ENCODE measurements at regions of chr11 and their contacts with region 1.

Region 1: DNA sequence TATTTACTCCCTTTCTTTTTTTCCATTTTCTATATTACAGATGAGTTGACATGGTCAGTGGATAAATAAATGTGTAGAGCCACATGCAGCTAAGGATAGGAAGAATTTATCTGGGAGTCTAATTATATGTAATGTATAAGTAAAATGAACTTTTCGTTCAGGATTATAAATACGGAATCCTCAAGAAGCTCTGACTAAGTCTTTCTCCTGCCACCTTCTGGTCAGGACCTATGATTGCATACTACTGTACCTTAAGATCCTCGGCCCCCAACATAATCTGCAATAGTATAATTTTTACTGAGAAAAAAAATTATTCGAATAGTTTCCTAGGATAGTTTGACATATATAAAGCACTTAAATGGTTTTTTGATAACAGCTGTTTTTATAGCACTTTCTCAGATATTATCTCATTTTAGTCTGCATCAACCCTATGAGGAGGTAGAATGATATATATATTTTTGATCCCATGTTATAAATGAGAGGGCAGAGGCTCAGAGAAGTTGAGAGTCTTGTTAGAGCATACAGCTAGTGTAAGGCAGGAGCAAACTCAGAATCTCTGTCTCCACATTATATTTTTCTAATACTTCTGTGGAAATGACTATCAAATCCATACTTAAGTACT is 36.1 kb downstream of the CCDC90B start:
- DNase-seq: peak in 7 of 9 donors; percentile 12 to 48 (median 40)
- ATAC-seq: peak; percentile 77
- H3K4me3 ChIP-seq: no peak overlapping the region
- H3K4me3 Mint-ChIP-seq: peak overlapping the region in 1 of 10 donors; percentile 32
- H3K27ac ChIP-seq: no peak overlapping the region
- H3K27ac Mint-ChIP-seq: no peak overlapping the region
- H3K4me1 ChIP-seq: no peaks in the 10 kb centered on the region
- H3K4me1 Mint-ChIP-seq: peaks cover 0 to 7% (median 0%) of the 10 kb centered on the region in 7 donors
- H3K27me3 ChIP-seq: no peaks in the 10 kb centered on the region
- H3K27me3 Mint-ChIP-seq: no peaks in the 10 kb centered on the region

Region 2: GRCh38 chr11:82988936-82989627 is 261.0 kb before region 1 on chr11:
- CTCF ChIA-PET with region 1: interaction called, 3 read pairs
- POLR2A ChIA-PET with region 1: no interaction called
- intact Hi-C with region 1: loop called in 1 of 2 experiments (anchors 1 kb)
- DNase-seq: no peak
- ATAC-seq: no peak
- H3K4me3 ChIP-seq: no peak overlapping the region
- H3K4me3 Mint-ChIP-seq: peak overlapping the region in 1 of 10 donors; percentile 13
- H3K27ac ChIP-seq: no peak overlapping the region
- H3K27ac Mint-ChIP-seq: peak overlapping the region in 4 of 9 donors; percentile 22 to 69 (median 32)
- H3K4me1 ChIP-seq: peaks cover 0 to 4% of the 10 kb centered on the region in 2 donors
- H3K4me1 Mint-ChIP-seq: peaks cover 1 to 24% (median 15%) of the 10 kb centered on the region in 7 donors
- H3K27me3 ChIP-seq: no peaks in the 10 kb centered on the region
- H3K27me3 Mint-ChIP-seq: no peaks in the 10 kb centered on the region

Region 3: GRCh38 chr11:83087035-83087434 is 163.0 kb before region 1 on chr11:
- CTCF ChIA-PET with region 1: interaction called, 5 read pairs
- POLR2A ChIA-PET with region 1: interaction called, 4 read pairs
- intact Hi-C with region 1: loop called (anchors 1 to 2 kb)
- DNase-seq: no peak
- ATAC-seq: no peak
- H3K4me3 ChIP-seq: no peak overlapping the region
- H3K4me3 Mint-ChIP-seq: no peak overlapping the region
- H3K27ac ChIP-seq: peak overlapping the region; percentile 10
- H3K27ac Mint-ChIP-seq: peak overlapping the region in 8 of 9 donors; percentile 10 to 74 (median 38)
- H3K4me1 ChIP-seq: peaks cover 0 to 4% of the 10 kb centered on the region in 2 donors
- H3K4me1 Mint-ChIP-seq: peaks cover 8 to 44% (median 32%) of the 10 kb centered on the region in 7 donors
- H3K27me3 ChIP-seq: no peaks in the 10 kb centered on the region
- H3K27me3 Mint-ChIP-seq: no peaks in the 10 kb centered on the region

Region 4: DNA sequence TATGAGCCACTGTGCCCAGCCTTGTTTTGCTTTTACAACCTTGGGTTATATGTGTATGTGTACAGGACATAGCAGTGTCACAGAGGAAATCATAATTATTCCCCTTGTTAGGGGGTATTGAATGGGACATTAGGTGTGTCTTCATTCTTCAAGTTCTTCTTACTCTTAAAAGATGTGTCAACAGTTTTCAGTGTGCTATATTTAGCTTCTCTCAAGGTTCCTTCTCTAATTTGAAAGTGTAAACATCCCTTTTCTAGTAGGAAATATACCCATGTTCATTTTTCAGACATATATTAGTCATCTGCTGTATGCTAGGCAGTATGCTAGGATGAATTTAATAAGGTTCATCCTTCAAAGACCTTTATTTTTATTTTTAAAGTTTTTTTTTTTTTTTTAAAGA is 76.1 kb before region 1 on chr11:
- CTCF ChIA-PET with region 1: interaction called, 4 read pairs
- POLR2A ChIA-PET with region 1: no interaction called
- intact Hi-C with region 1: loop called in 1 of 2 experiments (anchors 5 kb)
- DNase-seq: no peak
- ATAC-seq: peak; percentile 37
- H3K4me3 ChIP-seq: no peak overlapping the region
- H3K4me3 Mint-ChIP-seq: peak overlapping the region in 9 of 10 donors; percentile 2 to 85 (median 55)
- H3K27ac ChIP-seq: no peak overlapping the region
- H3K27ac Mint-ChIP-seq: peak overlapping the region in 3 of 9 donors; percentile 33 to 76 (median 36)
- H3K4me1 ChIP-seq: peaks cover 39 to 51% of the 10 kb centered on the region in 2 donors
- H3K4me1 Mint-ChIP-seq: peaks cover 36 to 85% (median 72%) of the 10 kb centered on the region in 7 donors
- H3K27me3 ChIP-seq: no peaks in the 10 kb centered on the region
- H3K27me3 Mint-ChIP-seq: no peaks in the 10 kb centered on the region

Region 5: DNA sequence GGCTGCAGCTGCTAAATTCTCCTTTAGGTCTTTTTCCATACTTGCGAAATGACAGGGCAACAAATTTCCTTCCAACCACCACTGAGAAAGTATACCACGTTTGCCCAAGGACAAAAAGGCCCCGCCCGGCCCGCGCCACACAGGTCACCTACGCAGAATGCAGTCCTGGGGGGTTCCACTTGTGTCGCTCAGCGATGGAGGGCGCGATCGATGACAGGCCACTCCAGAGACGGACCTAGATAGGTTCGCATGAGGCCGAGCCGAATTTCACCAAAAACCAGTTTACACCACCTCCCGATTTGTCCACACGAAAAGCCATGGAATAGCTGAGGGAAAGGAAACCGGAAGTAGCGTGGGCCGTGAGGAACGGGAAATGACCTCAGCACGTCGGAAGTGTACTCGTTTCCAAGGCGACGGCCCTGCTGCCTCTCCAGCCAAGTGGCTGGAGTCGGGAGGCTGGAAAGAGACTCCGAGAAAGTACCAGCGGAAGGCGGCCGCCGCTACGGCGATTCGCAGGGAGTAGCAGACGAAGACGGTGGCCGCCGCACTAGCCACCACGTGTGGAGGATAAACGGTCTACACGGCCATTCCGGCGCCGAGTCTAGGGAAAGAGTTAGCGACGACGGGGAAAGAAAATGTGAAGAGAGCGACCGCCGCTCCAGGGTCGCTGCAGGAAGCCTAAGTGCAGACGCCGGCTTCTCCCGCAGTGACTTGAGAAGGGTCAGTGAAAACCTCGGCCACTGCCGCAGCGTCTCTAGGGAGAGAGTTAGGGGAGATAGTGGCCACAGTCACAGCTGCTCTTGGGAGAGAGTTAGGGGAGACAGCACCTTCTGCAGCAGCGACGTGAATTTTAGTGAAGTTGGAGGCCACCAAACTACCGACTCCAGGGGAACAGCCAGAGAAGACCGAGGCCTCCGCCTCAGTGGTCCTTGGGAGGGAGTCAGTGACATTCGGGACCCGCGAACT is 56.5 kb before region 1 on chr11 and contains the start of gene ANKRD42:
- CTCF ChIA-PET with region 1: interaction called, 3 read pairs
- POLR2A ChIA-PET with region 1: interaction called, 4 read pairs
- intact Hi-C with region 1: loop called in 1 of 2 experiments (anchors 1 kb)
- DNase-seq: peak; percentile 66 to 90 (median 87)
- ATAC-seq: peak; percentile 84
- H3K4me3 ChIP-seq: peak within 1 kb of the TSS; percentile 89
- H3K4me3 Mint-ChIP-seq: peak within 1 kb of the TSS; percentile 92 to 100 (median 98)
- H3K27ac ChIP-seq: peak within 1 kb of the TSS; percentile 99
- H3K27ac Mint-ChIP-seq: peak within 1 kb of the TSS; percentile 96 to 100 (median 99)
- H3K4me1 ChIP-seq: peaks cover 22 to 29% of the 10 kb centered on the region in 2 donors
- H3K4me1 Mint-ChIP-seq: peaks cover 33 to 61% (median 50%) of the 10 kb centered on the region in 7 donors
- H3K27me3 ChIP-seq: no peaks in the 10 kb centered on the region
- H3K27me3 Mint-ChIP-seq: no peaks in the 10 kb centered on the region
- total RNA-seq, gene ANKRD42: 3.1 to 10.9 (median 7.0) TPM

Region 6: DNA sequence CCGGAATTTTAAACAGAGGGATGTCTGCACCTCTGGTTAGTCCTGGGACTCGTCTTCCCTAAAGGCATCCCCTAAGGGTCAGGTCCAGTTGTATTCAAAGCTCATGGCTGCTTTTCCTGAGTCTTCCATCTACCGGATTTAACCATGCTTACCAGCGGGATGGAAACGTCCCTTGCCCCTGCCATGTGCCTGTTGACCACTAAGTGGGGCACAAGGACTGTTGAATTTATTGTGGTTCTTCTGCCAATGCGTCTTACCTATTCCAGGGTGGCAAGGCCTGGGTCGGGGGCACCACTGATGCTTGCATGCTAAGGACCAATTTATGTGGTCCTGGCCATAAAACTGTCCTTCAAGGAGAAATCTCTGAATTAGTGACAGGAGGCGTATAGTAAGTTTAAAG is 31.0 kb before region 1 on chr11:
- CTCF ChIA-PET with region 1: no interaction called
- POLR2A ChIA-PET with region 1: interaction called, 3 read pairs
- intact Hi-C with region 1: loop called in 1 of 2 experiments (anchors 5 kb)
- DNase-seq: no peak
- ATAC-seq: no peak
- H3K4me3 ChIP-seq: no peak overlapping the region
- H3K4me3 Mint-ChIP-seq: no peak overlapping the region
- H3K27ac ChIP-seq: no peak overlapping the region
- H3K27ac Mint-ChIP-seq: no peak overlapping the region
- H3K4me1 ChIP-seq: no peaks in the 10 kb centered on the region
- H3K4me1 Mint-ChIP-seq: no peaks in the 10 kb centered on the region
- H3K27me3 ChIP-seq: no peaks in the 10 kb centered on the region
- H3K27me3 Mint-ChIP-seq: peaks cover 0 to 10% (median 0%) of the 10 kb centered on the region in 5 donors

Region 7: GRCh38 chr11:83336993-83337392 is 86.9 kb after region 1 on chr11:
- CTCF ChIA-PET with region 1: no interaction called
- POLR2A ChIA-PET with region 1: no interaction called
- intact Hi-C with region 1: no loop called
- DNase-seq: no peak
- ATAC-seq: no peak
- H3K4me3 ChIP-seq: no peak overlapping the region
- H3K4me3 Mint-ChIP-seq: no peak overlapping the region
- H3K27ac ChIP-seq: no peak overlapping the region
- H3K27ac Mint-ChIP-seq: no peak overlapping the region
- H3K4me1 ChIP-seq: no peaks in the 10 kb centered on the region
- H3K4me1 Mint-ChIP-seq: peaks cover 0 to 2% (median 0%) of the 10 kb centered on the region in 7 donors
- H3K27me3 ChIP-seq: no peaks in the 10 kb centered on the region
- H3K27me3 Mint-ChIP-seq: peaks cover 0 to 5% (median 0%) of the 10 kb centered on the region in 5 donors

Region 8: DNA sequence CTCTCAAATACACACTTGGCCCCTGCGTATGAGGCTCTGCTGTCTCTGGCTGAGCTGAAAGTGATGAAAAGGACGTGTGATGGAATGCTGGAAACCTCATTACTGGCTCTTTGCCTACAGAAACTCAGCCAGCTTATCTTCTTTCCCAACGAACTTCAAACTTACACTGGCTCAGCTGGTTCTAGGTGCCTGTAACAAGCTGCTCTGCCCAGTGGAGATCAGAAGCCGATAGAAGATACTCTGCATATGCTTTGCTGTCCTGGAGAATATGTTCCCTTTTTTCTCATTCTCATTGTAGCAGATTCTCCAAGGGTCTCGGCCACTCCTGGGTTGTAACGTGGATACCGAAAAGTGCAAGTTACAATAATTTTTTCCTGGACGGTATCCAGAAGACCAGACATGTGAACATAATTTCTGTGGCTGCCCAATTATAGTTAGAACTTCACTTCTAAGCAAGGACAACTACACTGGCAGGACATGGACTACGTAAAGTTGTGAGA is 441.4 kb after region 1 on chr11:
- CTCF ChIA-PET with region 1: no interaction called
- POLR2A ChIA-PET with region 1: no interaction called
- intact Hi-C with region 1: no loop called
- DNase-seq: no peak
- ATAC-seq: no peak
- H3K4me3 ChIP-seq: no peak overlapping the region
- H3K4me3 Mint-ChIP-seq: no peak overlapping the region
- H3K27ac ChIP-seq: no peak overlapping the region
- H3K27ac Mint-ChIP-seq: no peak overlapping the region
- H3K4me1 ChIP-seq: no peaks in the 10 kb centered on the region
- H3K4me1 Mint-ChIP-seq: no peaks in the 10 kb centered on the region
- H3K27me3 ChIP-seq: no peaks in the 10 kb centered on the region
- H3K27me3 Mint-ChIP-seq: peaks cover 0 to 20% (median 15%) of the 10 kb centered on the region in 5 donors

Measured in naive thymus-derived CD4-positive, alpha-beta T cell (primary cell).